OCI-LY7 (cell line): ENCODE measurements at regions of chr11 and their contacts with region 1.

Region 1: DNA sequence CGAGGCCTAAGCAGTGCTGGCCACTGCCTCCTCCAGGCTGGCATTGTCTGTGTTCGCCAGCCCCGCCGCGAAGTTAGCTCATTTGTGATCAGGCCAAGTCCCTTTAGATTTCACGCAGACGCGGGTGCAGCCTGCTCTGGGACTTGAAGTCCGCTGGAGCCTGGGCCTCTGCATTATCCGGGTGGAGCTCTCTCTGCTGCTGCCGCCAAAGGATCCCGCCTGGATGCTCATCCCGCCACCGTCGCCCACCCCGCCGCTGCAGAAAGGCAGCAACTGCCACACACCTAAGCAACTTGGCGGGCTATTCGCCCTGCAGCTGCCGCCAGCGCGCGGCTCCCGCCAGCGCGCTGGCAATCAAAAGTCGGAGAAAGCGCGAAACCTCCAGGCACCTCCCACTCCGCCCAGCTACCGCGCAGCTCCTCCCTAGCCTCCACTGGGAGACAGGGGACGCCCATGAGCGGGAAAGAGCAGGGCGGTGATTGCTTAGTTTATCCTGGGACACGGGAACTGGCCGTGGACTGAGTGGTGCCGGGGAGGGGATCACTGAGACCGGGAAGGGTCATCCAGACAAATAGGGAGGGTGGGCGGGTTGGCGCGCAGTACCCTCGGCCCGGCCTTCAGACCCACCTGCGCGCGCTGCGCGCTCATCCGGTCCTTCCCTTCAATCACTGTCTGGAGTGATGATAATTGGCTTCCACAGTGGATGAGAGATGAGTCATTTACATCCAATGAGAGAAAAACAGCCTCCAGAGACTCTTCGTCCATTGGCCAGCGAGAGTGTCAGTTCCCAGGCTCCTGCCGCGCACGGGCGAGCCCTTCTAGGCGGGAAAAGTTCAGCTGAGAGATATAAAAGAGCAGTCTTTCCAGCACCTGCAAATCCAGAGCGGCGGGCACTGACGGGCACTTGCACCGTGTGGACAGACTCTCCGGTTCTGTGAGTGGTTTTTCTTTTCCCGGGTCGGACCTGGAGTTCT is at the start of gene FAM111B:
- DNase-seq: peak; percentile 91
- H3K4me3 ChIP-seq: peak within 1 kb of the TSS; percentile 88
- H3K27ac ChIP-seq: peak within 1 kb of the TSS; percentile 70
- H3K4me1 ChIP-seq: peaks cover 77% of the 10 kb centered on the region
- CTCF ChIP-seq: peak; percentile 35
- total RNA-seq, gene FAM111B: 30.3 and 37.6 TPM in 2 replicates

Region 2: DNA sequence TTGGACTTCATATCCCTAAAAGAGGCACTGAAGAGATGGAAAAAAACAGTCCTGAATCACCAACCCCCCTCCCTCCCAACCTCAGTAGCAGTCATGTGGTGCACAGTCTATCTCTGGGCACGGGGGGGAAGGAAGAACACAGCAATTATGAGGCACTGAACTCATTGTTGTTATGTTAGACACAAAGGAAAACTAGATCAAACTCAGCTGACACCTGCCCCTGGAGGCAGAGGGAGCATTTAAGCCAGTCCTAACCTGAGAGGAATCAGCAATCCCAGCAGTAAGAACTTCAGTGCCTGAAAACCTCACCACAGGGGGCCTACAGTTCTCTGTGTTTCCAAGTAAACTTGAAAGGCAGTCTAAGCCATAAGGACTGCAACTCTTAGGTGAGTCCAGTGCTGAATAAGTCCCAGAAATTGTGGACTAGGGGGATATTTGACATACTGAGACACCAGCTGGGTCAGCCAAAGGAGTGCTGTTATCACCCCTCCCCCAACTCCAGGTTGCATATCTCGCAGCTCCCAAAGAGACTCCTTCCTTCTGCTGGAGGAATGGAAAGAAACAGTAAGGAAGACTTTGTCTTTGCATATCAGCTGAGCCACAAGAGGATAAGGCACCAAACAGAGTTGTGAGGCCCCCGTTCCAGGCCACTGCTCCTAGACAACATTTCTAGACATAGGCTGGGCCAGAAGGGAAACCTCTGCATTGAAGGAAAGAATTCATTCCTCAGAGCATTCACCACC is 94.8 kb before region 1 on chr11:
- CTCF ChIA-PET with region 1: no interaction called
- POLR2A ChIA-PET with region 1: no interaction called
- intact Hi-C with region 1: no loop called
- DNase-seq: peak; percentile 30
- H3K4me3 ChIP-seq: no peak overlapping the region
- H3K27ac ChIP-seq: peak overlapping the region; percentile 30
- H3K4me1 ChIP-seq: peaks cover 36% of the 10 kb centered on the region
- CTCF ChIP-seq: no peak

Region 3: DNA sequence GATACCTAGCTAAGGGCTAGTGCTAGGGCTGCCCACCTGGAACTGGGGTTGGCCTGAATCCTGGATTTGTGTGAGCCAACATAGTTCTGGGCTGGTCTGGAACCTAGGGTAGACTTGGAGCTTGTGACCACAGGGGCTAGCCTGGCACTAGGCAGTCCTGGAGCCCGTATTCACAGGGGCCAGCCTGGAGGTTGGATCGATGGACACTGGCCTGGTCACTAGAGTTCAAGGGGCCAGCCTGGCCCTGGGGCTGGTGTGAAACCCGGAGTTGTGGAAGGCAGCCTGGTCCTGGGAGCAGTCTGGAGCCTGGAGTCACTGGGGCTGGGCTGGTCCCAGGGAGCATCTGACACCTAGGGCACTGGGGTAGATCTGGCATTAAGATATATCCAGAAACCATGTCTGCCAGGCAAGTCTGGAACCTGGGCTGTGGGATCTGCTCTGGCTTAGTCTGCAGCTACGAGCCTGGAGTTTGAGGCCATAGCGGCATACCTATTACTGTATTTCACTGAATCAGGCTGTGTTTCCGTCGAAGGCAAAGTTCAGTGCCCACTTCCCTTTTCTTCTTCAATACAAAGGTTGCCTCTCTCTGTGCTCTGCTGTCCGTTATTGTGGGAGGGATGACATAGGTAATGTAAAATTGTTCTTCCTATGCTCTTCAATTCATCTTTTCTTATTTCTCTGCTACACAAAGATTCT is 29.6 kb before region 1 on chr11:
- CTCF ChIA-PET with region 1: no interaction called
- POLR2A ChIA-PET with region 1: interaction called, 7 read pairs
- intact Hi-C with region 1: loop called (anchors 2 kb)
- DNase-seq: peak; percentile 87
- H3K4me3 ChIP-seq: peak overlapping the region; percentile 46
- H3K27ac ChIP-seq: peak overlapping the region; percentile 80
- H3K4me1 ChIP-seq: peaks cover 47% of the 10 kb centered on the region
- CTCF ChIP-seq: no peak

Region 4: DNA sequence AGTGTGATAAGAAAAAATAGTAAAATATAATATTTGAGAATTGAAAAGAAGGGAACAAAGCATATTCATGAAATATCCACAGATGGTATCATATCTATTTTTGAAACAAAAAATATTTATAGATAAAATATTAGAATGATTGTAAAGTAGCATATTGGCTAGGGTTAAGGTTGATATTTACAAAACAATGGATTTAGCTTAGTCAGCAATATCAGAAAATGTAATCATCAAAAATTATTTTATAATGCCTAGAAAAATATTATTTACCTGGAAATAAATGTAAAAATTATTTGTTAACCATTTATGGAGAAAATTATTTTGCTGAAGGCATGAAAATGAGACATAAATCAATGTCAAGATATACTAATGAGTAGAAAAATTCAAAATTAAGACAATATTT is 13.2 kb after region 1 on chr11:
- CTCF ChIA-PET with region 1: no interaction called
- POLR2A ChIA-PET with region 1: interaction called, 12 read pairs
- intact Hi-C with region 1: no loop called
- DNase-seq: no peak
- H3K4me3 ChIP-seq: no peak overlapping the region
- H3K27ac ChIP-seq: no peak overlapping the region
- H3K4me1 ChIP-seq: no peaks in the 10 kb centered on the region
- CTCF ChIP-seq: no peak

Region 5: GRCh38 chr11:59142530-59143507 is 36.2 kb after region 1 on chr11 and contains the start of gene FAM111A:
- CTCF ChIA-PET with region 1: interaction called, 3 read pairs
- POLR2A ChIA-PET with region 1: interaction called, 6 read pairs
- intact Hi-C with region 1: loop called (anchors 2 kb)
- DNase-seq: peak; percentile 81
- H3K4me3 ChIP-seq: peak within 1 kb of the TSS; percentile 90
- H3K27ac ChIP-seq: peak within 1 kb of the TSS; percentile 90
- H3K4me1 ChIP-seq: peaks cover 40% of the 10 kb centered on the region
- CTCF ChIP-seq: peak; percentile 75
- total RNA-seq, gene FAM111A: 80.8 and 83.9 TPM in 2 replicates